GM12878 (cell line): ENCODE measurements at regions of chr12 and their contacts with region 1.

Region 1: DNA sequence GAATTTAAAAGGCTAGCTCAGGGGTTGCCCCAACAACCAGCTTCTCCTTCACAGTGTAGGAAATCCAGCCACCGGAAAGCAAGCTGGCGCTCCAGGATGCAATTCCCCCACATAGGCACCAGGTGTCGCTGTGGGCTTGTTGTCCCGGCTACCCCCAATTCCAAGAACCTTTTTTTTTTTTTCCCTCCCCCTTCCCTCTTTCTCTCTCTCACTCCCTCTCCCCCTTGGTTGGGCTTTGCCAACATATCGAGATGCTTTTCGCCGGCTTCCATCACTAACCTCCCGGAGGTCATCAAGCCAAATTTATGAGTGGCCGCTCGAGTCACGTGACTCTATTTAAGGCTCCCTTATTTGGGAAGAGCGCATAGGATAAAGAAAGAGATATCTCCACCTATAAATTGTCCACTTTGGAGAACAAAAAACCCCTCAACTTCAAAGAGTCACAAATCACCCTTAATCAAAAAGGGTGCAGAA is at the start of gene HOXC5:
- DNase-seq: no peak
- ATAC-seq: peak; percentile 43
- H3K4me3 ChIP-seq: peak within 1 kb of the TSS; percentile 61
- H3K27ac ChIP-seq: no peak within 1 kb of the TSS
- H3K4me1 ChIP-seq: peaks cover 9% of the 10 kb centered on the region; the same call in 1 of the 2 replicates
- H3K27me3 ChIP-seq: peaks cover 3 to 30% of the 10 kb centered on the region in 2 experiments
- CTCF ChIP-seq: peak; percentile 93 to 96 (median 95)
- EP300 ChIP-seq: 0 out of 4 replicates have a peak, but pooled peaks of 1 of the 2 experiments have one; percentile 37
- POLR2A ChIP-seq: no peak
- RAD21 ChIP-seq: peak; percentile 94
- polyA plus RNA-seq, gene HOXC5: not detected

Region 2: DNA sequence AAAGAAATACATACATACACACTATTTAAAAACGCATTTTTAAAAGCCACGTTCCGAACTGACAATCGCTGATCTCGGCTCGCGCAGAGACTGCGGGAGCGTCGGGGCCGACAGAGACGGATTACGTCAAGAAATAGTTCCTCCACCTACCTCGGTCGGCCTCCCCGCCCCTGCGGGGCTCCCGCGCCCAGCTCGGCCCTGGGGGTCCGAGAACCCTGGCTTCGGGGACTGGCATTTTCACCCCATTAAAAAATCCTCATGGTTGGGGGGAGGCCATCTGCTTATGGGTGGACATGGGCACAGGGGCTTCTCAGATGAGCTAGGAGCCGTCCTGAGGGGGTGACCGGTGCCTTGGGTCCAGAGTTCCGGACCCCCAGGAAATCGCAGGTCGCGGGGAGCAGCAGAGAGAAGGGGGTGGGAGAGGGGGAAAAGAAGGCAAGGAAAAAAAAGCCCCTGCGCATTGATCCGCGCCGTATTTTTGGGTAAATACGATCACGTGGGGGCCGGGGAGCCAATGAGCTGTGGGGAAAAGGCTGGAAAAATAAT is 33.0 kb before region 1 on chr12:
- CTCF ChIA-PET with region 1: interaction called, 47 read pairs
- POLR2A ChIA-PET with region 1: interaction called, 4 read pairs
- RAD21 ChIA-PET with region 1: interaction called, 36 read pairs
- SMC1A ChIA-PET with region 1: interaction called, 23 read pairs
- in situ Hi-C with region 1: no loop called
- intact Hi-C with region 1: no loop called
- DNase-seq: no peak
- ATAC-seq: no peak
- H3K4me3 ChIP-seq: no peak overlapping the region
- H3K27ac ChIP-seq: no peak overlapping the region
- H3K4me1 ChIP-seq: peaks cover 7% of the 10 kb centered on the region
- H3K27me3 ChIP-seq: peaks cover 21 to 39% of the 10 kb centered on the region in 2 experiments
- CTCF ChIP-seq: no peak
- EP300 ChIP-seq: no peak
- POLR2A ChIP-seq: no peak
- RAD21 ChIP-seq: no peak

Region 3: DNA sequence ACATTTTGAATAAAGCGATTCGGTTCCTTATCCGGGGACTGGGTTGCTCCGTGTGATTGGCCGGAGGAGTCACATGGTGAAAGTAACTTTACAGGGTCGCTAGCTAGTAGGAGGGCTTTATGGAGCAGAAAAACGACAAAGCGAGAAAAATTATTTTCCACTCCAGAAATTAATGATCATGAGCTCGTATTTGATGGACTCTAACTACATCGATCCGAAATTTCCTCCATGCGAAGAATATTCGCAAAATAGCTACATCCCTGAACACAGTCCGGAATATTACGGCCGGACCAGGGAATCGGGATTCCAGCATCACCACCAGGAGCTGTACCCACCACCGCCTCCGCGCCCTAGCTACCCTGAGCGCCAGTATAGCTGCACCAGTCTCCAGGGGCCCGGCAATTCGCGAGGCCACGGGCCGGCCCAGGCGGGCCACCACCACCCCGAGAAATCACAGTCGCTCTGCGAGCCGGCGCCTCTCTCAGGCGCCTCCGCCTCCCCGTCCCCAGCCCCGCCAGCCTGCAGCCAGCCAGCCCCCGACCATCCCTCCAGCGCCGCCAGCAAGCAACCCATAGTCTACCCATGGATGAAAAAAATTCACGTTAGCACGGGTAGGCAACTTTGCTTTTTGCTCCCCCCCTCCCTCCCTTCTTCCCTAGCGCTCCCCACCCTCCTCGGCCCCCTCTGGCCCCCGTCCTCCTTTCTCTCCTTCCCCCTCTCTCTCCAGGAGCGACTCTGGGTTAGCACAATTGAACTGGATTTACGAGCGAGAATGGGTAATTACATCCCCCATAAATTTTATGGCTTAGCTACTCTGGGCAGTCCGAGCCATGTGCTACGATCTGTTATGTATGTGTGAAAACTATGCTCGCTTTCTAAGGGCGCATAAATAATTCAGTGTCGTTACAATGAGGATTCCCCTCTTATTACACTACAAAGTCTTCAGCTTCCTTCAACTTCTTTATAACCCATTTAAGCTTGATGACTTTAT is 21.4 kb after region 1 on chr12 and contains the start of gene HOXC4:
- CTCF ChIA-PET with region 1: interaction called, 86 read pairs
- POLR2A ChIA-PET with region 1: interaction called, 4 read pairs
- RAD21 ChIA-PET with region 1: interaction called, 56 read pairs
- SMC1A ChIA-PET with region 1: interaction called, 35 read pairs
- in situ Hi-C with region 1: no loop called
- intact Hi-C with region 1: no loop called
- DNase-seq: no peak
- ATAC-seq: peak; percentile 86
- H3K4me3 ChIP-seq: peak within 1 kb of the TSS; percentile 84
- H3K27ac ChIP-seq: peak within 1 kb of the TSS; percentile 89
- H3K4me1 ChIP-seq: peaks cover 22% of the 10 kb centered on the region
- H3K27me3 ChIP-seq: no peaks in the 10 kb centered on the region
- CTCF ChIP-seq: no peak
- EP300 ChIP-seq: no peak
- POLR2A ChIP-seq: no peak; the same call in 1 of the 2 replicates
- RAD21 ChIP-seq: no peak
- polyA plus RNA-seq, gene HOXC4: 1.0 to 1.8 TPM

Region 4: DNA sequence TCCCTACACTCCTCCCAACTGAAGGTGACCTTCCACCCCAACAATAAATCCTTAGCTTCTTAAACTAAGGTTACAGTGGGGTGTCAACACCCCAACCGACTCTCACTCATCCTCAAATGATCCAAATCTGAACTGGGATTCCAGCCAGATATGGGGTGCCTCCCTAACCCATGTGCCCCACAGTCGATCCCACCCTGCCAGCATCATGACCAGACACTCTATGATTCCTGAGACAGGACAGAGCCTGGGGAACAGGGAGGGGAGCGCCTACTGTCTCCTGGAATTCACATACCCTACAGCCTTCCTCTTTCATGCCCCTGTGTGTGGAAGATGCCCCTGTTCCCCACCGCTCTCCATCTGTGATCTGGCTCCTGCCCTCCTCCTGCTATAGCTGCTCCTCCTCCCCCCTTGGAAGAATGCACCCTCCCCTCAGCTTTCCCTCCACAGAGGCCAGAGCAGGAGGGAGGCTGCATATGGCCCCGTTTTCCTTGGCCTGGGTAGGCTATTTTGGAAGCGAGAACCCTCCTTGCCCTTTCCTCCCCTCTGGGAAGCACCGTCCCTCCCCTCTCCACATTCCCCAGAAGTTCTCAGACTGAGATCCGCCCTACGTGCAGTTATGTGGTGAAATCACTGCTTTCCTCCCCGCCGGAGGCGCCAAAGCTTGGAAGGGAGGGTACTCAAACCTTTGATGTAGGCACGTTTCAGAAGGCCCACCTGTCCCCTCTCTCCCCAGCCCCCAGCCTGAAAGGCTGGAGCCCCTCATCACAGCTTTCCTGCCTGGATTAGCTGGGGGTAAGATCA is 108.1 kb after region 1 on chr12:
- CTCF ChIA-PET with region 1: interaction called, 58 read pairs
- POLR2A ChIA-PET with region 1: interaction called, 3 read pairs
- RAD21 ChIA-PET with region 1: interaction called, 61 read pairs
- SMC1A ChIA-PET with region 1: interaction called, 42 read pairs
- in situ Hi-C with region 1: no loop called
- intact Hi-C with region 1: loop called (anchors 2 kb)
- DNase-seq: no peak
- ATAC-seq: no peak
- H3K4me3 ChIP-seq: no peak overlapping the region
- H3K27ac ChIP-seq: no peak overlapping the region
- H3K4me1 ChIP-seq: no peaks in the 10 kb centered on the region
- H3K27me3 ChIP-seq: peaks cover 5 to 7% of the 10 kb centered on the region in 2 experiments
- CTCF ChIP-seq: no peak
- EP300 ChIP-seq: no peak
- POLR2A ChIP-seq: no peak
- RAD21 ChIP-seq: no peak

Region 5: DNA sequence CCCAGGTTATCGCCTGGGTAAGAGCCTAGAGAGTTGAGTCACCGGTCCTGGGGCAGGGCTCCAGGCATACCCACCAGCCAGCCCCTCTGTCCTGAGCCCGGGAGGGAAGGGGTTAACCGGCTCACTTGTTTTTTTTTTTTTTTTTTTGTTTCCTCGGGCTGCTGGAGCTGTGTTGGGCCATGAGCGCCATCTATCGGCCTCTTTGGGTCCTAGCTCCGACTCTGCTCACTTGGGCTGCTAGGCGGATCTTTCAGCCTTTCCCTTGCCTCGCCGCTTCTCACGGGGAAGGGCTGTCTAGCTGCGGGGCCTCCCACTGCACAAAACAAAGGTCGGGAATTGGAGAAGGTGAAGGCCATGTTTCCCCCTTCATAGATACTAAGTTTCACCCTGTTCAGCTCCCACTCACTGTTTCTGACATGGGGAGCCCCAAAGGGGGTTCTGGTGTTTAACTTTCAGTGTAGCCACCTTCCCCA is 158.9 kb after region 1 on chr12:
- CTCF ChIA-PET with region 1: interaction called, 343 read pairs
- POLR2A ChIA-PET with region 1: interaction called, 5 read pairs
- RAD21 ChIA-PET with region 1: interaction called, 222 read pairs
- SMC1A ChIA-PET with region 1: interaction called, 126 read pairs
- in situ Hi-C with region 1: loop called (anchors 10 kb)
- intact Hi-C with region 1: loop called (anchors 1 kb)
- DNase-seq: no peak
- ATAC-seq: peak; percentile 70
- H3K4me3 ChIP-seq: no peak overlapping the region
- H3K27ac ChIP-seq: no peak overlapping the region
- H3K4me1 ChIP-seq: peaks cover 10% of the 10 kb centered on the region
- H3K27me3 ChIP-seq: peaks cover 2 to 3% of the 10 kb centered on the region in 2 experiments; a peak in 1 of 4 replicates
- CTCF ChIP-seq: peak; percentile 86 to 94 (median 88)
- EP300 ChIP-seq: no peak; a peak in 1 of 4 replicates
- POLR2A ChIP-seq: no peak
- RAD21 ChIP-seq: peak; percentile 92